ENCODE measurements at regions of chr1 and their contacts with region 1.

Region 1: GRCh38 chr1:46223472-46223943 is 20.4 kb downstream of the LURAP1 start:
- DNase-seq: peak; percentile 81
- H3K4me3 ChIP-seq: no peak overlapping the region
- H3K27ac ChIP-seq: no peak overlapping the region
- H3K4me1 ChIP-seq: no peaks in the 10 kb centered on the region
- H3K27me3 ChIP-seq: no peaks in the 10 kb centered on the region
- CTCF ChIP-seq: peak; percentile 79 to 95 (median 92)
- POLR2A ChIP-seq: no peak

Region 2: DNA sequence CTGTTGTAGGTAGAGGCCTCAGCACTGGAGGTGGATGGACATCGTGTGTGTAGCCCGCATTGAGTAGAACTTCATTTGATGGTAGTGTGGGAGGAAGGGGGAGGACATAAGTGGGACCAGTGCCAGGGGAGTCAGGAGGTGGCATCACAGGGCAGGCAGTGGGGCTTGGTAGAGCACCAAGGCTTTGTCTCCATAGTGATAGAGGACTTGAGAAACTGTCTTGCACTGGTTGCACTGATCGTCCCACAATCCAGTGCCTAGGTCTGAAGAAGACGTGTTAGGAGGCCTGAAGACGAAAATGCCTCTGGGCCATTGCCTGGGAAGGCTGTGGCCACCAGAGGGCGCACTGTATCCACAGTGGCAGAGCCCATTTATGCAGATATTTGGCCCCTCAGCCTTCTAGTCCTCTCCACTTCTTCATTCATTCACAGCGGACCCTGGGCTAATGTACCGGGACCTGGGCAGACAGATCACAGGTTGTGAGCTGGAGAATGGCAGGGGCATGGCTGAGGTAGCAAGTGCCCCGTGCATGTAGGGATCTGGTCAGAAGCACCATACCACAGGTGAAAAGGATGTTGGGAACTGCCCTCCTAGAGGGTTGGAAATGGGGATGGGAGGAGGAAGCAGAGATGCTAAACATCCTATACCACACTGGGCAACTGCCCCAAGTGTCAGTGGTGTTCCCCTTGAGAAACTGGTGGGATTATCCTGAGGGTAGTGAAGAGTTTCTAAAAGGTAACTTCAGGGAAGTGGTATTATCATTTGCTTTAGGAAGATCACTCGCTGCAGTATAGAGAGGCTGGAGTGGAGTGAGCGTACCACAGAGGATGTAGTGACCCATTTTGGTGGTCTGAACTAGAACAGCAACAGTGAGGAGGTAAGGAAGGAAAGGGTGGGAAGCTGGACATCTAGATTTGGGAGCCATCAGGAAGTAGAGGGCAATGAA is 186.3 kb before region 1 on chr1:
- intact Hi-C with region 1: loop called (anchors 5 kb)
- DNase-seq: peak; percentile 86
- H3K4me3 ChIP-seq: no peak overlapping the region
- H3K27ac ChIP-seq: no peak overlapping the region
- H3K4me1 ChIP-seq: no peaks in the 10 kb centered on the region
- H3K27me3 ChIP-seq: no peaks in the 10 kb centered on the region
- CTCF ChIP-seq: peak; percentile 94 to 99 (median 98)
- POLR2A ChIP-seq: no peak